SK-N-SH (cell line): ENCODE measurements at regions of chr6 and their contacts with region 1.

Region 1: GRCh38 chr6:2988426-2989331 is 11.0 kb upstream of the NQO2 start:
- DNase-seq: peak; percentile 91
- H3K4me3 ChIP-seq: peak overlapping the region; percentile 66 to 81
- H3K27ac ChIP-seq: peak overlapping the region; percentile 98 to 99
- H3K4me1 ChIP-seq: peaks cover 18 to 19% of the 10 kb centered on the region in 2 experiments
- H3K27me3 ChIP-seq: no peaks in the 10 kb centered on the region
- CTCF ChIP-seq: peak; percentile 74
- EP300 ChIP-seq: no peak; a peak in 2 of 4 replicates
- RAD21 ChIP-seq: peak; percentile 76

Region 2: GRCh38 chr6:2841264-2842138 is 147.2 kb before region 1 on chr6 and contains the start of gene SERPINB1:
- CTCF ChIA-PET with region 1: interaction called, 36 read pairs
- POLR2A ChIA-PET with region 1: interaction called, 14 read pairs
- DNase-seq: peak; percentile 82
- H3K4me3 ChIP-seq: peak within 1 kb of the TSS; percentile 45 to 47
- H3K27ac ChIP-seq: peak within 1 kb of the TSS; percentile 67 to 87
- H3K4me1 ChIP-seq: peaks cover 25 to 26% of the 10 kb centered on the region in 2 experiments; a peak in 3 of 4 replicates
- H3K27me3 ChIP-seq: no peaks in the 10 kb centered on the region
- CTCF ChIP-seq: no peak
- EP300 ChIP-seq: no peak
- RAD21 ChIP-seq: no peak
- polyA plus RNA-seq, gene SERPINB1: 9.4 and 10.9 TPM in 2 replicates

Region 3: GRCh38 chr6:2917801-2918445 is 70.8 kb before region 1 on chr6:
- CTCF ChIA-PET with region 1: no interaction called
- POLR2A ChIA-PET with region 1: no interaction called
- DNase-seq: no peak
- H3K4me3 ChIP-seq: no peak overlapping the region
- H3K27ac ChIP-seq: no peak overlapping the region
- H3K4me1 ChIP-seq: no peaks in the 10 kb centered on the region
- H3K27me3 ChIP-seq: no peaks in the 10 kb centered on the region; the same call in 1 of the 2 replicates
- CTCF ChIP-seq: no peak
- EP300 ChIP-seq: no peak
- RAD21 ChIP-seq: no peak

Region 4: DNA sequence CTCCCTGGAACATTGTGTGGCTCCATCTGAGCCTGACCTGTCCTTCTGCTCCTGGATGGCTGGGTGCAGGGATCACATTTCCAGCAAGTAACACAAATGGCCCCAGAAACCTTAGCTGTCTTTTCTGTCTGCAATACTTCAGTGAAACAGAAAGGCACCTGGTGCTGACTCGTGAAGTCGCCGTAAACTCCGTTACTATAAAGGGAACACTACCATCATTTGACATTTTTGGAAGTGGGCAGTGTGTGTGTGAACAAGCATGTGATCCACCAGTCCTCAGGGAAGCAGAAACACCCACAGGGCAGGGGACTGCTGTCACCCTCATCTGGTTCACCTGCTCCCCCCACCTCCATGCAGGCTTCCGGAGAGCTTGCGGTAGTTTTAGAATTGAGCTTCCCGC is 41.2 kb before region 1 on chr6:
- CTCF ChIA-PET with region 1: interaction called, 88 read pairs
- POLR2A ChIA-PET with region 1: interaction called, 26 read pairs
- DNase-seq: no peak
- H3K4me3 ChIP-seq: no peak overlapping the region
- H3K27ac ChIP-seq: no peak overlapping the region
- H3K4me1 ChIP-seq: peaks cover 0 to 2% of the 10 kb centered on the region in 2 experiments; a peak in 1 of 4 replicates
- H3K27me3 ChIP-seq: no peaks in the 10 kb centered on the region
- CTCF ChIP-seq: no peak
- EP300 ChIP-seq: no peak
- RAD21 ChIP-seq: no peak

Region 5: GRCh38 chr6:2971420-2972218 is 17.1 kb before region 1 on chr6 and contains the start of gene SERPINB6:
- CTCF ChIA-PET with region 1: interaction called, 11 read pairs
- POLR2A ChIA-PET with region 1: interaction called, 38 read pairs
- DNase-seq: peak; percentile 84
- H3K4me3 ChIP-seq: peak within 1 kb of the TSS; percentile 67 to 69
- H3K27ac ChIP-seq: peak within 1 kb of the TSS; percentile 56 to 85
- H3K4me1 ChIP-seq: peaks cover 9 to 10% of the 10 kb centered on the region in 2 experiments; a peak in 3 of 4 replicates
- H3K27me3 ChIP-seq: no peaks in the 10 kb centered on the region
- CTCF ChIP-seq: 0 out of 2 replicates have a peak, but pooled peaks have one; percentile 10
- EP300 ChIP-seq: no peak
- RAD21 ChIP-seq: no peak
- polyA plus RNA-seq, gene SERPINB6: 102 and 111 TPM in 2 replicates

Region 6: GRCh38 chr6:3068329-3069214 is 79.9 kb after region 1 on chr6 and contains the start of gene RIPK1:
- CTCF ChIA-PET with region 1: interaction called, 5 read pairs
- POLR2A ChIA-PET with region 1: interaction called, 19 read pairs
- DNase-seq: peak; percentile 98
- H3K4me3 ChIP-seq: peak within 1 kb of the TSS; percentile 90 to 93
- H3K27ac ChIP-seq: peak within 1 kb of the TSS; percentile 95 to 98
- H3K4me1 ChIP-seq: peaks cover 7 to 14% of the 10 kb centered on the region in 2 experiments; a peak in 3 of 4 replicates
- H3K27me3 ChIP-seq: no peaks in the 10 kb centered on the region
- CTCF ChIP-seq: peak; percentile 42
- EP300 ChIP-seq: no peak
- RAD21 ChIP-seq: peak; percentile 45
- polyA plus RNA-seq, gene RIPK1: 12.0 and 15.7 TPM in 2 replicates

Region 7: DNA sequence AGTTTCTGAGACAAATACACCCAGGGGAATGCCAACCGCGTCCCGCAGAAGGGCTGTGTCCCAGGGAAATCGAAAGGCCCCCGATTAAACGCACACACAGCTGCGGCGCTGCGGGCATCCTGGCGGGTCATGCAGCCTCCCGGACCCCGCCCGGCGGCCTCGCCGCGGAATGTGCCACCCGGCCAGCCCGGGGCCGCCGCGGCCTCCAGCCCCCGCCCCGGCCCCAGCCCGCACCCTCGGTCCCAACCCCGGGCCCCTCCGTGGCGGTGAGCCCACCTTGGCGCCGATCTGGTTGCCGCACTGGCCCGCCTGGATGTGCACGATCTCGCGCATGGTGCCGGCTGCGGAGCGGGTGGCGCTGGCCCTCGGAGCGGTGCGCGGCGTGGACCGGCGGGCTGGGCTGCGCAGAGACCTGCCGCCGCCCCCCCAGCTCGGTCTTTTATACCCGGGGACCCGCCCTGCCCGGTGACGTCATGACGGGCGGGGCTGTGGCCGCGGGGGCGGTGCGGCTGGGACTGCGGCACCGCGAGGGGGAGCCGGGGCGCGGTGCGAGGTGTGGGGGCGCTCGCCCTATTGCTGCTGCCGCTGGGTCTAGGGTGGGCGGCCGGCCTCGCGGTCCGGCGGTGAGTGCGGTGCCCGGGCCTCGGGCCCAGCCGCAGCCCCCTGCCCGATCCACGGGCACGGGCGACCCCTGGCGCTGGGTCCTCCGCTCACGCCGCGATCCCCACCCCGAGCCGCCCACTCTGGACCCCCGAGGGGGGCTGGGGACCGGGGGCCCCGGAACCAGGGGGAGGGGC is 168.7 kb after region 1 on chr6 and contains the start of gene TUBB2A:
- CTCF ChIA-PET with region 1: no interaction called
- POLR2A ChIA-PET with region 1: no interaction called
- DNase-seq: peak; percentile 98
- H3K4me3 ChIP-seq: peak within 1 kb of the TSS; percentile 87 to 95
- H3K27ac ChIP-seq: peak within 1 kb of the TSS; percentile 72 to 74; a peak in 3 of 4 replicates
- H3K4me1 ChIP-seq: peaks cover 5 to 8% of the 10 kb centered on the region in 2 experiments; a peak in 1 of 4 replicates
- H3K27me3 ChIP-seq: no peaks in the 10 kb centered on the region
- CTCF ChIP-seq: peak; percentile 56
- EP300 ChIP-seq: peak in 1 of 2 experiments; percentile 64; a peak in 1 of 4 replicates
- RAD21 ChIP-seq: no peak; the same call in 1 of the 2 replicates
- polyA plus RNA-seq, gene TUBB2A: 169 and 199 TPM in 2 replicates

Region 8: DNA sequence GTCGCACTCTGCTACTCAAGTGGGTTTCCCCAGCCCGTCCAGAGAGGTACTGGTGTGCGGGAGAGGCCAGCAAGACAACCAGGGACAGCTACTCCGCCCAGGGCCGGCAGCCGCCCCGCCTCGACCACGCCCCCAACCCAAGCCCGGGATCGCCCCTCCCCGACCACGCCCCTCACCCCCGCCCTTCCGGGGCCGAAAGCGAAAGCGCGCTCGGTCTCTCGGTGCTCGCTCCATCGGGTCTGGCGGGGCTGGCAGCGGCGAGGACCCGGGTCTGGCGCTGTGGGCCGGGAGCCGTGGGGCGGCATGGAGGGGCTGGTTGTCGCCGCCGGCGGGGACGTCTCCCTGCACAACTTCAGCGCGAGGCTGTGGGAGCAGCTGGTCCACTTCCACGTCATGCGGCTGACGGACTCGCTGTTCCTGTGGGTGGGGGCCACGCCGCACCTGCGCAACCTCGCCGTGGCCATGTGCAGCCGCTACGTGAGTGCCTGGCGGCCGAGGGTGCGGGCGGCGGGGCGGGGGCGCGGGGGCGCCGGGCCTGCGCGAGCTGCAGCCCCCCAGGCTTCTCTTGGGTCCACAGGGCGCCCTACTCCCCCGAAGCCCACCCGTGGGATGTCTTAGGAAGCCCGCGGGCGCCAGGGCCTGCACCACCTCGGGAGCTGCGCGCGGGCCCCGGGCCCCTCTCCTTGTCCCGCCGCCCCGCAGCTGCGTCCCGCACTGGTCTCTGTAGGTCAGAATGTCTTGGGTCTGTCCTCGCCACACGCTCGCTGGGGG is 270.2 kb after region 1 on chr6 and contains the start of gene PSMG4:
- CTCF ChIA-PET with region 1: no interaction called
- POLR2A ChIA-PET with region 1: no interaction called
- DNase-seq: peak; percentile 100
- H3K4me3 ChIP-seq: peak within 1 kb of the TSS; percentile 75 to 88
- H3K27ac ChIP-seq: peak within 1 kb of the TSS; percentile 40 to 84; a peak in 3 of 4 replicates
- H3K4me1 ChIP-seq: peaks cover 6 to 23% of the 10 kb centered on the region in 2 experiments; a peak in 1 of 4 replicates
- H3K27me3 ChIP-seq: no peaks in the 10 kb centered on the region; the same call in 1 of the 2 replicates
- CTCF ChIP-seq: no peak
- EP300 ChIP-seq: 0 out of 4 replicates have a peak, but pooled peaks of 1 of the 2 experiments have one; percentile 16
- RAD21 ChIP-seq: no peak
- polyA plus RNA-seq, gene PSMG4: 60.0 and 61.3 TPM in 2 replicates